ENCODE measurements at regions of chr3 and their contacts with region 1.

Region 1: DNA sequence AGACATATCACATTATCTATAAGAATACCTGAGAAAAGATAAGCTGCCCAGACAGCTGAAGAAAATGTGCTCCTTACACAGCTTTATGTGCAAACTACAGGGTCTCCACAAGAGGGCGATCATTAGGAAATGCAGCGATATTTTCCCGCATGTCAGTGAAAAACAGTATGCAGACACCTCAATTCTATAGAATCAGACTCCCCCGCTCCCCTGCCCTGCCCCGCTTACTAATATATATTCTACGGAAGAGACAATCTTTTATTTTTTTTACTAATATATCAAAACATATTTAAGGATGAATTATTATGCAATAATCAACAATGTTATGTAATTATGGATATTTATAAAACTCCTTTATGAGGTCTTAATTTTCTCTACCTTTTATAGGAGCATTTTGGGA is 681.3 kb downstream of the ROBO1 start:
- DNase-seq: no peak
- ATAC-seq: peak; percentile 49

Region 2: DNA sequence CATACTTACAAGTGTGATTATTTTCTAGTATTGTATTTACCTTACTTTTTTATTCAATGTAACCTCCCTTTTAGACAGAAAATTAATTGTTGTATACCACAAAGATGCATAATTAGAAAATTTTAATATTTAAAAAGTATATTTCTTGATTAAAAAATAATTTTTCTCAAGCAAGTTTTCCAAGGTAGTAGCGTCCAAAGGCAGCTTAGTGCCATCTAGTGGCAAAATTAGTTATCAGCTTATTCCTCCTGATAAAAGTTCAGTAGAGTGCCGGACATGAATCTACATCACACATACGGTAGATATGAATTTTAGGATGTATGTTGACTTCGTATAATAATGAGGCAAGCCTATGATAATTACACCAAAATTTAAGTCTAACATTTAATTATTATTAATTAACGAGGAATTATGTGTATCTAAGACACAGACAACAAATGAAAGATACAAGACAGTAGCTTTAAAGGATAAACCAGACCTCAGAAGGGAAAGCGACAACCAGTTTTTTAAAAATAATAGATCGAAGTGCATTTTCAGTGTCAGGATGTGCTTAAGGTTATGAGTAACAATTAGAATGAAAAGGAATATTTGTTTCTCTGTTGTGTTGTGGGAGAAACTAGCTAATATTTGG is 275.3 kb after region 1 on chr3:
- intact Hi-C with region 1: loop called (anchors 10 kb)
- DNase-seq: no peak
- ATAC-seq: no peak